Posterior vena cava (tissue), 2 donors: ENCODE measurements at regions of chr20 and their contacts with region 1.

Region 1: DNA sequence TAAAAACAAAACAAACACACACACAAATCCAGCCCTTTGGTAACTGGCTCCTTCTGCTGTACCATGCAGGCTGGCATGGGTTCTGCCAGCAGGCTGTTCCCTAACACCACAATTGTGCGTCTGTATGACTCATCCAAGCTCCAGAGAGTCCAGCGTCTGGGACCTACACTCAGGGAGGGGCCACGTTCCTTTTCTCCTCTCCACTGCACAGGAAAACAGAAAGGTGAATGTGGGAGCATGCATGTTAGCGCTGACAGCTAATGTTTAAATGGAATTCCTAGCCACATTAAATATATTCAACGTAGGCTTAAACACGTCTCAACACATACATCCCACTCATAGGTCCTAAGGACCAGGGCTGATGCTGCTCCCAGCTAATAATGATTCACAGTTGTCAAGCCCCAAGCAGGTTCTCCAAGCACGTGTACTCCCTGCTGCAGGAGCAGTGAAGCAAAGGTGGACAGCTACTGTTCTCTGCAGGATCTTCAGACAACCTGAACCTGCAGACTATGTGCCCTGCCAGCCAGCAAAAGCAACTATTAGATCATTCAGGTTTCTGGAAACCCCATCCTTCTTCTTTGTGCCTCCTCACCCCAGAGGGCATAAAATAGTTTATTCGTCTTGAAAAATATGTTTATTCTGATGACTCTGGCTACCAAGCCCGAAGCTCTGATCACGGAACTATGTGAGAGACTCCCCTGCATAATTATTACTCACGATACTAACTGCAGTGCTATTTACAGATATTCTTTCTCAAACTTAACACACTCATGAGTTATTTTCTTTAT is 20.9 kb downstream of the MAP1LC3A start:
- DNase-seq: no peak

Region 2: GRCh38 chr20:34199183-34199582 is 380.2 kb before region 1 on chr20:
- intact Hi-C with region 1: no loop called
- DNase-seq: no peak

Region 3: DNA sequence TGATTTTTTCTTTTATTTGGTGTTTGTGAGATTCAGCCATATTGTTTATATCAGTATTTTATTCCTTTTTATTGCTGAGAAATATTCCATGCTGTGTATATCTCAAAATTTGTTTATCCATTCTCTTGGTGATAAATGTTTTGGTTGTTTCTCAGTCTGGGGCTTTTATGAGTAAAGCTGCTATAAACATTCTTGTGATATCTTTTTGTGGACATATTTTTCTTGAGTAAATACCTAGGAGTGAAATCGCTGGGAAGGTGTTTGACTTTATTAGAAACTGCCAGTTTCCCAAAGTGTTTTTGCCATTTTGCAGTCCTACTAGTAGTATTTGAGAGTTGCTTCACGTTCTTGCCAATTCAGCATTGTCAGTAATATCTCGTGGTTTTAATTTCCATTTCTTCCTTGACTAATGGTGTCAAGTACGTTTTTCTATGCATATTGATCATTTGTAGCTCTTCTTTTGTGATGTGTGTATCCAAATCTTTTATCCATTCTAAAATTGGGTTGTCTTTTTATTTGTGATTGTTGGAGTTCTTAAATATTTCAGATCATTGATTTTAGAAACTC is 94.2 kb before region 1 on chr20:
- intact Hi-C with region 1: no loop called
- DNase-seq: no peak

Region 4: DNA sequence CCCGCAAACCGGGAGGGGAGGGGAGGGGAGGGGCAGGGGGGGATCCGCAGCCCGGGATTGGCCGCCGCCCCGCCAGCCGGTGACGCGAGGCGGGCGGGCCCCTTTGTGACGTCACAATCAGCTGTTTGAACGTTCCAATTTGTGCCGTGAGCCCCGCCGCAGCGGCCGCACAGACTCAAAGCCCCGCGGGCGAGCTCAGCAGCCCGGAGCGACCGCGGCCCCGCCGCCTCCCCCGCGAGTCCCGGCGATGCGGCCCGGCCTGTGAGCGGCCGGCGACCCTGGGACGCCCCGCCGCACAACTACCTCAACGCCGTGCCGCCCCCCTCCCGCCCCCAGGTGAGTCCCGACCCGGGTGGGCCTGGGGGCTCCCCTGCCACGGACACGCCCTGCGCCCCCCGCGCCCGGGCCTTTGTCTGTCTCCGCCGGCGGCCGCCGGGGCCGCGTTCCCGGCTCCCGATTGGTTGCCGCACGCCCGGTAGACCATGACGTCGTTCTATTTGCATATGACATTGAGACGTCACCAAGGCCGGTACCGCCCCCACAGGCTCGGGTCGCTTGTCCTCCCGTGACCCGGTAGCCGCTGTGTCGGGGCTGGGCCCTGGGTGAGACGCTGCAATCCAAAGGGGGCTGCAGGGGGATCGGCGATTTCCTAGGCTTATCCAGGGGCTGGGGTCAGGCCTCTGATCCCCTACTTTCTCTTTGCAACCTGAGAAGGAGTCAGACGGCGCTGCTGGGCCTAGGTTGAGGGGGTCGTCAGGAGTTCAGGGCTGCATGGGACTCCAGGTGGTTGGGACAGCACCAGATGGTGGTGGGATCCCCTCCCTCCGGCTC is 125.0 kb after region 1 on chr20 and contains the start of gene TP53INP2:
- intact Hi-C with region 1: loop called in 1 of 2 experiments (anchors 5 kb)
- DNase-seq: peak; percentile 97
- total RNA-seq, gene TP53INP2: 34.0 to 44.7 TPM

Region 5: DNA sequence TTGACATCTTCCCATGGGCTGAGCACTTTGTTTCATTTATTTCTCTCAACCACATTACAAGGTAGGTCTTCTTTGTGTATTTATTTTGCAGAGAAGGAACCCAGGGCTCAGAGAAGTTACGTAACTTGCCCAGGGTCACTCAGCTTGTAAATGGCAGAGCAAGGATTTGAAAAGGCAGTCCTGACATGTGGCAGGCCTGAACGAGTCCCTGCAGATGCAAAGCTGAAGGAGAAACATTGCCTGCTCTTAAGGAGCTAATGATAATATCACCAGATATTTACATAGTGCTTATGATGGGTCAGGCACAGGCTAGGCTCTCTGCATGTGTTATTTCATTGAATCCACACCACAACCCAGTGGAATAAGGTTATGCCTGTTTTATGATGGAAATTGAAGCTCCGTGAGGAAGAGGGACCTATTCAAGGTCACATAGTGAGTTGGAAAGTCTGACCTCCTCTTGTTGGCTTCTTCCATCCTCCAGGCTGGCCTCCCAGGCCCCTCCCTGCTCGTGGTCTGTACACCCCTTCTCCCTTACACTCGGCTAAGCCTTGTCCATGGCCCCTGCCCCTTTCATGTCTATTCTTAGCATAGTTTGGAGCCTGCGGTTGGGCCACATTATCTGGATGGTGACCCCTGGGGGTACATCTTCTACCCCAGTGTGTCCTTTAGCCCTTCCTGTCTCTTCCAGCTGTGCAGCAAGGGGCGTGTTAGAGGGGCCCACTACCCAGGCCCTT is 388.8 kb after region 1 on chr20:
- intact Hi-C with region 1: loop called in 1 of 2 experiments (anchors 10 kb)
- DNase-seq: no peak